H1 (cell line): ENCODE measurements at regions of chr4 and their contacts with region 1.

Region 1: DNA sequence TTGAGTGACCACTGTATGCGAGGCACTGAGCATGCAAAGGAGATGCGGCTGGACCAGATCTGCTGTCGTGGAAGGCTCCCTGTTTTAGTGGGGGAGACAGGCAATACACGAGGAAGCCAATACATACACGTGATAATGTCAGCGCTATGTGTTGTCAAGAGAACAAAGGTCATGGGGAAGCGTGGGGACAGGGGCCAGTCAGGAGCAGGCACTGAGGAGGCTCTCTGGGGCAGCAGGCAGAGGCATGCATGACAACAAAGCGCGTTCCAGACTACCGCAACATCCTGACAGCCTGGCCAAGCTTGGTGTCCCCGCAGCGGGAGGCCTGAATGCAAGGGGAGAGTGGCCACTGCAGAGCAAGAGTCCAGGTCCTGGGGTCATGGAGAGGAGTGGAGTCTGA is 61.9 kb downstream of the DCTD start:
- DNase-seq: no peak
- H3K4me3 ChIP-seq: no peak overlapping the region
- H3K27ac ChIP-seq: no peak overlapping the region; the same call in 1 of the 2 replicates
- H3K4me1 ChIP-seq: peaks cover 0 to 7% (median 1%) of the 10 kb centered on the region in 4 experiments; a peak in 1 of 7 replicates
- H3K27me3 ChIP-seq: no peaks in the 10 kb centered on the region
- CTCF ChIP-seq: no peak
- EP300 ChIP-seq: no peak
- POLR2A ChIP-seq: no peak
- RAD21 ChIP-seq: no peak

Region 2: GRCh38 chr4:182925298-182925738 is 70.0 kb after region 1 on chr4:
- CTCF ChIA-PET with region 1: interaction called, 10 read pairs
- POLR2A ChIA-PET with region 1: no interaction called
- DNase-seq: peak; percentile 69 to 78
- H3K4me3 ChIP-seq: no peak overlapping the region
- H3K27ac ChIP-seq: no peak overlapping the region
- H3K4me1 ChIP-seq: no peaks in the 10 kb centered on the region; a peak in 1 of 7 replicates
- H3K27me3 ChIP-seq: no peaks in the 10 kb centered on the region
- CTCF ChIP-seq: peak; percentile 76 to 96 (median 89)
- EP300 ChIP-seq: no peak
- POLR2A ChIP-seq: no peak
- RAD21 ChIP-seq: peak; percentile 82 to 88